A549 (cell line): ENCODE measurements at regions of chr6 and their contacts with region 1.

Region 1: GRCh38 chr6:7725849-7726415 is at the start of gene BMP6:
- DNase-seq: peak; percentile 88 to 93
- ATAC-seq: peak; percentile 68 to 86
- H3K4me3 ChIP-seq: peak within 1 kb of the TSS; percentile 56
- H3K27ac ChIP-seq: peak within 1 kb of the TSS; percentile 52 to 86
- H3K4me1 ChIP-seq: peaks cover 47% of the 10 kb centered on the region
- CTCF ChIP-seq: no peak
- EP300 ChIP-seq: no peak
- POLR2A ChIP-seq: peak; percentile 61
- RAD21 ChIP-seq: no peak
- polyA plus RNA-seq, gene BMP6: 23.0 and 26.5 TPM in 2 replicates

Region 2: DNA sequence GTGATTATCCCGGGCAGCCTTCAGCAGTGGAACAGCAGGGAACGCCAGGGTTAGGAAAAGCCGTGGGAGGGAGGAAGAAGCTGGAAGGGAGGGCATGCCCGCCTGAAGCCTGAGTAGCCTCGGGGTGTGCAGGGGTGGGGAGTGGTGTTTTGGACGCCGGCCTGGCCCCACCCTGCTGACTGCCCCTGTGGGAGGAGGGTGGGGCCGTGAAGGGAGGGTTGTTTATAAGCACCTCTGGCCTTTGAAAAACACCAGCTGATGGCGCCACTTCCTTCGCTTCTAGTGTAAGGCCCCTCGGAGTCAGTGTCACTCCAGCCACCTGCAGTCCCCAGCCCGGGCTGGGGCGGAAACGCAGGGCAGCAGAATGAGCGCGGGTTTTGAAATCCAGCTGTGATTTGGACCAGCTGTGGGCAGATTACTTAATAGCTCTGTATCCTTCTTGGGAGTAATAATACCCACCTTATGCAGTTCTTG is 52.8 kb before region 1 on chr6:
- CTCF ChIA-PET with region 1: interaction called, 12 read pairs
- POLR2A ChIA-PET with region 1: no interaction called
- DNase-seq: peak in 1 of 2 experiments; percentile 64
- ATAC-seq: peak; percentile 45 to 71; a peak in 3 of 6 replicates
- H3K4me3 ChIP-seq: no peak overlapping the region
- H3K27ac ChIP-seq: peak overlapping the region; percentile 47 to 77
- H3K4me1 ChIP-seq: peaks cover 38% of the 10 kb centered on the region
- CTCF ChIP-seq: no peak
- EP300 ChIP-seq: no peak
- POLR2A ChIP-seq: no peak
- RAD21 ChIP-seq: peak; percentile 16 to 42; a peak in 2 of 5 replicates

Region 3: GRCh38 chr6:7697820-7698623 is 27.9 kb before region 1 on chr6:
- CTCF ChIA-PET with region 1: interaction called, 17 read pairs
- POLR2A ChIA-PET with region 1: interaction called, 4 read pairs
- DNase-seq: peak; percentile 37 to 96
- ATAC-seq: peak; percentile 86 to 91
- H3K4me3 ChIP-seq: peak overlapping the region; percentile 9; the same call in 1 of the 3 replicates
- H3K27ac ChIP-seq: peak overlapping the region; percentile 82 to 85
- H3K4me1 ChIP-seq: peaks cover 59% of the 10 kb centered on the region
- CTCF ChIP-seq: no peak
- EP300 ChIP-seq: peak; percentile 95
- POLR2A ChIP-seq: no peak
- RAD21 ChIP-seq: no peak; a peak in 3 of 5 replicates

Region 4: DNA sequence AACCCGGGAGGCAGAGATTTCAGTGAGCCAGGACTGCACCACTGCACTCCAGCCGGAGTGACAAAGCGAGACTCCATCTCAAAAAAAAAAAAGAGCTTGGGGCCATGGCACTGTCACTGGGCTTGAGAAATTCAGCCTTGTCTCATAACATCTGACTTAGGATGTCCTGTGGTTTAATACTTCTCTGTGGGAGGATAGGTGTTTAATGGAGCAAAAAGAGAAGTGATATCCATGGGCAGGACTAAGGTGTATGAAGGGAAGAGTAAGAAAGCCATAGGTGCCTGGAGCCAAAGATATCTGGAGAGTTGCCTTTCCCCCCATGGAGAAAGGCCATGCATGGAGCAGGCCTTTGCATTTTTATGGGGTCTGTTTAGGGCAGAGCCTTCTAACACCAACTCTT is 11.2 kb after region 1 on chr6:
- CTCF ChIA-PET with region 1: interaction called, 11 read pairs
- POLR2A ChIA-PET with region 1: no interaction called
- DNase-seq: no peak
- ATAC-seq: no peak
- H3K4me3 ChIP-seq: no peak overlapping the region
- H3K27ac ChIP-seq: no peak overlapping the region
- H3K4me1 ChIP-seq: peaks cover 5% of the 10 kb centered on the region
- CTCF ChIP-seq: no peak
- EP300 ChIP-seq: no peak
- POLR2A ChIP-seq: no peak
- RAD21 ChIP-seq: no peak

Region 5: GRCh38 chr6:7821426-7821825 is 95.5 kb after region 1 on chr6:
- CTCF ChIA-PET with region 1: no interaction called
- POLR2A ChIA-PET with region 1: no interaction called
- DNase-seq: no peak
- ATAC-seq: no peak
- H3K4me3 ChIP-seq: no peak overlapping the region
- H3K27ac ChIP-seq: no peak overlapping the region
- H3K4me1 ChIP-seq: no peaks in the 10 kb centered on the region
- CTCF ChIP-seq: no peak
- EP300 ChIP-seq: no peak
- POLR2A ChIP-seq: no peak
- RAD21 ChIP-seq: no peak

Region 6: GRCh38 chr6:7992002-7992815 is 266.3 kb after region 1 on chr6:
- CTCF ChIA-PET with region 1: interaction called, 59 read pairs
- POLR2A ChIA-PET with region 1: interaction called, 3 read pairs
- DNase-seq: peak; percentile 44 to 54
- ATAC-seq: peak; percentile 81 to 86
- H3K4me3 ChIP-seq: no peak overlapping the region
- H3K27ac ChIP-seq: peak overlapping the region; percentile 54 to 55; a peak in 5 of 6 replicates
- H3K4me1 ChIP-seq: peaks cover 15% of the 10 kb centered on the region
- CTCF ChIP-seq: peak; percentile 63
- EP300 ChIP-seq: no peak
- POLR2A ChIP-seq: no peak
- RAD21 ChIP-seq: peak; percentile 75 to 77

Region 7: GRCh38 chr6:8006208-8006607 is 280.3 kb after region 1 on chr6:
- CTCF ChIA-PET with region 1: interaction called, 52 read pairs
- POLR2A ChIA-PET with region 1: no interaction called
- DNase-seq: peak; percentile 25 to 53
- ATAC-seq: peak in 1 of 2 experiments; percentile 57; a peak in 1 of 6 replicates
- H3K4me3 ChIP-seq: no peak overlapping the region
- H3K27ac ChIP-seq: no peak overlapping the region
- H3K4me1 ChIP-seq: no peaks in the 10 kb centered on the region
- CTCF ChIP-seq: peak; percentile 69
- EP300 ChIP-seq: no peak
- POLR2A ChIP-seq: no peak
- RAD21 ChIP-seq: peak; percentile 73 to 76

Region 8: DNA sequence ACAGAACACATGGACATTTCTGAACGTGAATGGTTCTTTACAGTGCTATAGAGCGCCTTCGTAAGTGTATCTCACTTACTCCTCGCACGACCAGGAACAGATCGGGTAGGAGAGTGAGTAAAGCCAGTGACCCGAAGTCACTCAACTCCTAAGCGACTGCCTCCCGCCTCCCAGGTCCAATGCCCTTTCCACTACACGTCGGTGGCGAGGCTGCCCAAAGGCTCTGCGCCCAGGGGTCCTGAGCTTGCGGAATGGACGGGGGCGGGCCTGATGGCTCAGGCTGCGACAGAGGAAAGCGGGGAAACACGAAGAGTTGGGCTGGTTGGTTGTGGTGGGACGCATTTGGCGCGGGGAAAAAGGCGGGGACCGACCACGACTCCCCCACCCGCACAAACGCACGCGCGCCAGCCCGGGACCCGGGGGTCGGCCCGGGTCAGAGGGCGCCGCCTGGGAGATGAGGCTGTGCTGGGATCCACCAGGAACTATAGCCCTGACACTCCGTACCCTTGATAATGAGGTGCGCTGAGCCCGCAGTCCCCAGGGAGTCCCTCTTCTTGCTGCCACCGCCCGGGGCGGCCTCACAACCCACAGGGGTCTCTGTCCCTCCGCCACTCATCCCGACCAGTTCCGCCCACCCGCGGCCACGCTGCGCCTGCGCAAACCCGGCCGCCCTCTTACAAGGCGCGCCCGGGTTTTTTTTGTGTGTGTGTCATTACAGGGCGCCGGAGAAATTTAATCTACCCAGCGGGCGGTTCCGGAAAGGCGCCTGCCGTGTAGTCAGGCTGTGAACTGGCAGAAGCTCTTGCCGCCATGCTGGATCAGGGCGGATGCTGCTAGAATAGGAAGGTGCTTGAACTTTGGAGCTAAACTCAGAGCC is 338.1 kb after region 1 on chr6 and contains the start of gene BLOC1S5:
- CTCF ChIA-PET with region 1: interaction called, 48 read pairs
- POLR2A ChIA-PET with region 1: interaction called, 3 read pairs
- DNase-seq: peak; percentile 41 to 95
- ATAC-seq: peak; percentile 97 to 98
- H3K4me3 ChIP-seq: peak within 1 kb of the TSS; percentile 93
- H3K27ac ChIP-seq: peak within 1 kb of the TSS; percentile 89 to 96
- H3K4me1 ChIP-seq: peaks cover 6% of the 10 kb centered on the region
- CTCF ChIP-seq: no peak
- EP300 ChIP-seq: no peak
- POLR2A ChIP-seq: peak; percentile 44
- RAD21 ChIP-seq: no peak
- polyA plus RNA-seq, gene BLOC1S5: 7.9 and 10.8 TPM in 2 replicates